Activated T-helper 1 cell treated with anti-CD3 and anti-CD28 coated beads, Interleukin-12 subunit alpha, Interleukin-12 subunit beta, Interleukin-2, Interleukin-4 antibody, amounts not matched to agents 30 ng/mL and 10 ng/mL and 1 ng/mL, durations not matched to agents 14 hours and 24 hours and 36 hours (primary cell): ENCODE measurements at regions of chr5 and their contacts with region 1.

Region 1: GRCh38 chr5:132103332-132103951 is 29.9 kb downstream of the CSF2 start:
- DNase-seq: peak; percentile 78
- H3K4me3 Mint-ChIP-seq: peak overlapping the region; percentile 70
- H3K27ac Mint-ChIP-seq: peak overlapping the region; percentile 100
- H3K4me1 Mint-ChIP-seq: peaks cover 91% of the 10 kb centered on the region
- H3K27me3 Mint-ChIP-seq: no peaks in the 10 kb centered on the region

Region 2: DNA sequence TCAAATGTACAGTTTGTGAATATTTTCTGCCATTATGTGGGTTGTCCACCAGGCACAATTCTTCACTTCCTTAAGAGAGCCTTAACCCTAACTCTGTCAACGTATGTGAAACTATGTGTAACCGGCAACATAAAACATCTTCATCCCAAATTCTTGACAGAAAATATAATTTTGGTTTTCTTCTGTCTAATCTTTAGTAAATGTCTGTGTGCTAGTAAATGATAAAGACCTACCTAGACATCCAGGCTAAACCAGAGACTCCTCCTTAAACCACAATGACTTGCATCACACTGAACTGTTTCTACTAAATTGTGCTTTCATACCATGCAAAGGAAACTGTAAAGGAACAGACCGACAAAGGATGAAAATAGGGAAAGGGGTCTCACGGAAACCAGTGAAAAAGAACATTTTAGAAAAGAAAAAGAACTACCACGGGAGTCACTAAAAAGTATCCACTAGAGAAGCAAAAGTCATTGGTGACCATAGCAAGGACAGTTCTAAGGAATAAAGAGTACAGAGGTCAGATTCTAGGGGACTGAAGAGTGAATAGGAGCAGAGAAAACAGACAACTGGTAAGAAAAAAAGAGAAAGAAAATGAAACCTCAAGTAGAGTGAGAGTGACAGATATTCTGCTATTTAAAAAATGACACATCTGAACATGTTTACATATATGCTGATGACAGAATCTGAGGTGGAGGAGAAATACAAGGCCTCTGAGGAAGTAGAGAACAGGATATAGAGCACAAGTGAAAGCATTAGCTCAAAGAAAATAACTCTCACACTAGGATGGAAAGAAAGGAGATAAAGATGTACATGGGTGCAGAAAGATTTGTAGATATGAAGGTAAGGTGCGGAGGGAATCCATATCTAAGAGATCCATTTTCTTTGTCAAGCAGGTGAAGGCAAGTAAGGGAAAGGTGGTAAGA is 356.0 kb before region 1 on chr5:
- intact Hi-C with region 1: loop called (anchors 1 kb)
- DNase-seq: no peak
- H3K4me3 Mint-ChIP-seq: peak overlapping the region; percentile 40
- H3K27ac Mint-ChIP-seq: peak overlapping the region; percentile 85
- H3K4me1 Mint-ChIP-seq: peaks cover 40% of the 10 kb centered on the region
- H3K27me3 Mint-ChIP-seq: no peaks in the 10 kb centered on the region

Region 3: GRCh38 chr5:132019857-132020555 is 83.4 kb before region 1 on chr5:
- intact Hi-C with region 1: loop called (anchors 1 kb)
- DNase-seq: peak; percentile 85
- H3K4me3 Mint-ChIP-seq: peak overlapping the region; percentile 50
- H3K27ac Mint-ChIP-seq: peak overlapping the region; percentile 92
- H3K4me1 Mint-ChIP-seq: peaks cover 51% of the 10 kb centered on the region
- H3K27me3 Mint-ChIP-seq: peaks cover 48% of the 10 kb centered on the region

Region 4: GRCh38 chr5:132055808-132056609 is 47.4 kb before region 1 on chr5:
- intact Hi-C with region 1: no loop called
- DNase-seq: no peak
- H3K4me3 Mint-ChIP-seq: no peak overlapping the region
- H3K27ac Mint-ChIP-seq: peak overlapping the region; percentile 67
- H3K4me1 Mint-ChIP-seq: peaks cover 69% of the 10 kb centered on the region
- H3K27me3 Mint-ChIP-seq: peaks cover 25% of the 10 kb centered on the region

Region 5: GRCh38 chr5:132083071-132083678 is 20.3 kb before region 1 on chr5:
- intact Hi-C with region 1: loop called (anchors 1 kb)
- DNase-seq: no peak
- H3K4me3 Mint-ChIP-seq: peak overlapping the region; percentile 39
- H3K27ac Mint-ChIP-seq: peak overlapping the region; percentile 95
- H3K4me1 Mint-ChIP-seq: peaks cover 76% of the 10 kb centered on the region
- H3K27me3 Mint-ChIP-seq: peaks cover 1% of the 10 kb centered on the region

Region 6: GRCh38 chr5:132134384-132134783 is 30.9 kb after region 1 on chr5:
- intact Hi-C with region 1: loop called (anchors 2 kb)
- DNase-seq: no peak
- H3K4me3 Mint-ChIP-seq: no peak overlapping the region
- H3K27ac Mint-ChIP-seq: no peak overlapping the region
- H3K4me1 Mint-ChIP-seq: peaks cover 32% of the 10 kb centered on the region
- H3K27me3 Mint-ChIP-seq: peaks cover 17% of the 10 kb centered on the region

Region 7: DNA sequence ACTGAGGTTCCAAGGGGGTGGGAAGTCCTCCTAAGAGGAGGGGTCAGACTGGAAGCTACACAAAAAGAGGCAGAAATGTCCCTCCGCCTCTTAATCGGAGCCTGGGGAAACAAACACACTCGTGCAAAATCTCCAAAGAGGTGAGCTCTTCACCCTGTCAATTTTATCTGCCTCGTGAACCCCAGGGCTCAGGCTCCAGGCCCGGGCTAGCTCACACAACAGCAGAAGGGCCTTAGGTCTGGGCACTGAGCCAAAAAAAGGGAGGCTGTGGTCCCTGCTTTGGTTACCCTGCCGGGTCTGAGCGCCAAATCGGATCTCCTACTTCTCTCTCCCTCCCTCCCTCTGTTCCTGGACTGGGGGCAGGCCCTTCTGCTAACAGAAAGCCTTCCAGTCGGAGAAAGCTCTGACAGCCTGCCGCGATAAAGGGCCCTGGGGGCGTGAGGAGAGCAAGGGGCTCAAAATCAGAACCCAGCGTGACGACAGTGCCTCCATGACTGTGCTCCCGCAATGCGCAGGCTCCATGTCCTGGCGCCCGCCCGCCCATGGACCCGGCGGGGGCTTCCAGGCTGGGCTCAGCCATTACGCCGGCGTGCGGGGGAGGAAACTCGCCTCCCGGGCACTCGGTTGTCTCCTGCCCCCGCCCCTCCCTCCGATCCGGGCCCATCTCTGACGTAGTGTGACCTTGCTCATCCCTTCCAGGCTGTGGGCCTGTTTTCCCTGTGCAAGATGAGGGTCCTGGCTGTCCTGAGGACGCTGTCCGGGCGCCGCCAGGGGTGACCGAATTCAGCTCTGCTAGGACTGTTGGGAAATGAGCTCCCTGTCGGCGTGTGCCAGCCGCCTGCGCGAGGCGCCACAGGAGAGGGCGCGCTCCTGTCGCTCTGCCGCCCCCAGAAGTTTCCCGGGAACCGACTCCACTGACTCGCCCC is 189.9 kb after region 1 on chr5:
- intact Hi-C with region 1: loop called (anchors 10 kb)
- DNase-seq: peak; percentile 53
- H3K4me3 Mint-ChIP-seq: peak overlapping the region; percentile 93
- H3K27ac Mint-ChIP-seq: peak overlapping the region; percentile 75
- H3K4me1 Mint-ChIP-seq: peaks cover 30% of the 10 kb centered on the region
- H3K27me3 Mint-ChIP-seq: peaks cover 15% of the 10 kb centered on the region

Region 8: DNA sequence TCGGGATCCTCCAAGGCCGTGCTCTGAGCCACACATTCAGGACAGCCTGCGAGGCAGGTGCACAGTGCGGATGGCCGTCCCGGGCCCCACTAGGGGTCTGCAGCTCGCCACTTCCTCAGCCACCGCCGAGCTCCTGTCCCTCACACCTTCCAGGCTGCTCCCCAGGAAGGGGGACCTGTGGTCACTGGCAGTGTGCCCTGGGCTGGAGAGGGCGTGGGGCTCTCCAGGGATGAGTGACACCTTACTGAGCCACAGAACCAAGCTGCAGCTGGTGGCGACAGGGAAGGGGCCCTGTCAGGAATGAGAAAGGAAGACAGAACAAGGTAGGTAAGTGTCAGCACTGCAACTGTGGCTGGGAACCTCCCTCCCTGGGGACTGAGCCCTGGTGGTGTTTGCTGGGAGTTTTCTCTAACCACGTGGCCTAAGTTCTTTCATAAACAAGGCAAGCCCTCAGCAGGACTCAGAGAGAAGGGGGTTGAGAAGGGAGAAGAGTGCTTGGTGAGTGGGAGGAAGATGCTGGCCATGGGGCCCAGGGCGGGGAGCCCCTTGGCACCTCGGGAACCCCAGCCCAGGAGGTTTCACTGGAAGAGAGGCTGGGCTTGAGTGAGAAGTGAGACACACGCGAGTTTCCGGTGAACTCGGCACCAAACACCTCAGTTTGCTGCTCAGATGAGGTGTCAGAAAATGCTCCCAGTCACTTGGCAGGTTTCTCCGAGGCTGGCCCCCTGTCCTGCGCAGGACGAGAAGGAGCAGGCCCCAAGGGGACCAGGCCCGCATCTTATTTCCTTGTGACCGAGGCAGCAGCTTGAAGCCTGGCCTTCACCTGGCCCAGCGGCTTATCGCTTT is 559.7 kb after region 1 on chr5:
- intact Hi-C with region 1: loop called (anchors 5 kb)
- DNase-seq: peak; percentile 43
- H3K4me3 Mint-ChIP-seq: peak overlapping the region; percentile 60
- H3K27ac Mint-ChIP-seq: peak overlapping the region; percentile 94
- H3K4me1 Mint-ChIP-seq: peaks cover 84% of the 10 kb centered on the region
- H3K27me3 Mint-ChIP-seq: no peaks in the 10 kb centered on the region